ENCODE measurements at regions of chr16 and their contacts with region 1.

Region 1: DNA sequence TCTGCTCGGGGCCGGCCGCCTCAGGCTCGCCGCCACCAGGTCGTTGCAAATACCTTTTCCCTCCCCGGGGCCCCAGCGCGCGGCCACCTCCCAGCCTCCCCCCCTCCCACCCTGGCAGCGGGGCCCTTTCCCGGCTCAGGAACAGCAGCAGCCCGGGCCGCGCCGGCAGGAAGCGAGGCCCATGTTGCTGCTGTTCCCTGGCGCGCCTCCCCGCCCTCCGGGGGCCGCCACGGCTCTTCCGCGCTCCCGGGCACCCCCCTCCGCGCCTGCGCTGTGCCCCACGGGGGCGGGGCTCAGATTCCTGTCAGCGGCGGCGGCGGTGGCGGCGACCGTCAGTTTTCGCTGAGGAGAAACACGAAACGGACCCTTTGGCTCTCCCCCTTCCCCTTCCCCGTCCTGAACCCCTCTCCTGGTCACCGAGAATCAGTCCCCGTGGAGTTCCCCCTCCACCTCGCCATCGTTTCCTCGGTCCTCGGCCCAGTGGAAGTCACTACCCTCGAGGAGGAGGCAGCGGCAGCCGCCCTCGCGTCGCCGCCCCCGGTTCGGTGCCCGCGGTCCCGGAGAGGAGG is at the start of gene NFAT5:
- DNase-seq: peak; percentile 78 to 100 (median 96)
- ATAC-seq: peak; percentile 93
- H3K4me3 ChIP-seq: peak within 1 kb of the TSS; percentile 90
- H3K4me3 Mint-ChIP-seq: peak within 1 kb of the TSS; percentile 91 to 100 (median 97)
- H3K27ac ChIP-seq: peak within 1 kb of the TSS; percentile 97
- H3K27ac Mint-ChIP-seq: peak within 1 kb of the TSS; percentile 94 to 98 (median 96)
- H3K4me1 ChIP-seq: peaks cover 13 to 33% of the 10 kb centered on the region in 2 donors
- H3K4me1 Mint-ChIP-seq: peaks cover 39 to 59% (median 48%) of the 10 kb centered on the region in 7 donors
- H3K27me3 ChIP-seq: no peaks in the 10 kb centered on the region
- H3K27me3 Mint-ChIP-seq: no peaks in the 10 kb centered on the region
- total RNA-seq, gene NFAT5: 27.3 to 35.5 (median 34.2) TPM

Region 2: GRCh38 chr16:69132424-69133252 is 433.1 kb before region 1 on chr16 and contains the starts of genes CHTF8 and UTP4:
- CTCF ChIA-PET with region 1: no interaction called
- POLR2A ChIA-PET with region 1: no interaction called
- intact Hi-C with region 1: loop called (anchors 1 to 2 kb)
- DNase-seq: peak; percentile 81 to 91 (median 87)
- ATAC-seq: peak; percentile 95
- H3K4me3 ChIP-seq: peak within 1 kb of the TSS; percentile 80
- H3K4me3 Mint-ChIP-seq: peak within 1 kb of the TSS; percentile 91 to 97 (median 94)
- H3K27ac ChIP-seq: peak within 1 kb of the TSS; percentile 88
- H3K27ac Mint-ChIP-seq: peak within 1 kb of the TSS; percentile 85 to 97 (median 95)
- H3K4me1 ChIP-seq: peaks cover 12 to 23% of the 10 kb centered on the region in 2 donors
- H3K4me1 Mint-ChIP-seq: peaks cover 16 to 71% (median 61%) of the 10 kb centered on the region in 7 donors
- H3K27me3 ChIP-seq: no peaks in the 10 kb centered on the region
- H3K27me3 Mint-ChIP-seq: no peaks in the 10 kb centered on the region
- total RNA-seq, gene CHTF8: 53.3 to 142 (median 133) TPM
- total RNA-seq, gene UTP4: 31.9 to 56.5 (median 35.1) TPM

Region 3: GRCh38 chr16:69339289-69340108 is 226.3 kb before region 1 on chr16 and contains the starts of genes COG8 and NIP7:
- CTCF ChIA-PET with region 1: no interaction called
- POLR2A ChIA-PET with region 1: interaction called, 5 read pairs
- intact Hi-C with region 1: loop called (anchors 1 to 10 kb)
- DNase-seq: peak; percentile 78 to 91 (median 90)
- ATAC-seq: peak; percentile 95
- H3K4me3 ChIP-seq: peak within 1 kb of the TSS; percentile 80
- H3K4me3 Mint-ChIP-seq: peak within 1 kb of the TSS; percentile 97 to 100 (median 99)
- H3K27ac ChIP-seq: peak within 1 kb of the TSS; percentile 86
- H3K27ac Mint-ChIP-seq: peak within 1 kb of the TSS; percentile 95 to 99 (median 98)
- H3K4me1 ChIP-seq: peaks cover 20 to 25% of the 10 kb centered on the region in 2 donors
- H3K4me1 Mint-ChIP-seq: peaks cover 31 to 70% (median 49%) of the 10 kb centered on the region in 7 donors
- H3K27me3 ChIP-seq: no peaks in the 10 kb centered on the region
- H3K27me3 Mint-ChIP-seq: no peaks in the 10 kb centered on the region
- total RNA-seq, gene COG8: 29.5 to 73.7 (median 37.4) TPM
- total RNA-seq, gene NIP7: 22.1 to 40.9 (median 30.3) TPM

Region 4: DNA sequence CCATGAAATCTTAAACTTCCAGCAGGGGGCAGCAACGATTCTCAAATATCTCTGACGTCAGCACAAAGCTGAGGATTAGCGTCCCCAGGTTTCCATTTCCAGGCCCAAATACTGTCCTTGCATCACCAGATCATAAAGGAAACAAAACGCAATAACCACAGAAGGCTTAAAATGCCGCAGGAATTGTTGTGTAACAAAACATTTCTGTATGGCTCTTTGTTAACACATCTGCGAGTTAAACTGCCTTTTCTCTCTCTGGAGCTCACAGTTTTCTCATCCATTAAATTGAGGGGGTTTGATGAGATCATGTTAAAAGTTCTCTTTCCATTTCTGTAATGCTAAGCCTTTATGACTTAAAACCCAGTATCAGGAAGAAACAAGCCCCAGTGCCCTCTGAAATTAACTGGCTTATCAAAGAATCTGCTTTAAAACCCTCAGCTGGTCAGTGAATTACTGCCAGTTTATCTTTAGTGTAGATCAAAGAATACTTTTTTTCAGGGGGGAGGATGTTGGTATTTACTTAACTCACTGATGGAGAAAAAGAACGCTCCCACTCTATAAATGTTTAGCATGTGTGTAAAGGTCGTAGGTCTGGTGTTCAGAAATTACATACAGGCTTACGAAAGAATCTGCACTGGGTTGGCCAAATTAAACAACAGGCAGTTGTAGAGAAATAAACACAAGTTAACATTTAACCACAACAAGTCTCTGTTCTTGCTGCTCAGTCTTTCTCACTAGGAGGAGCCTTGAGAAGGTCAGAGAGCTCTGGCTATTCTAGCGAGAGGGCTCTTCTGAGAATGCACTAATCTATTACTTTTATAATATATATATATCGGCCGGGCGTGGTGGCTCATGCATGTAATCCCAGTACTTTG is 169.3 kb before region 1 on chr16:
- CTCF ChIA-PET with region 1: interaction called, 8 read pairs
- POLR2A ChIA-PET with region 1: interaction called, 4 read pairs
- intact Hi-C with region 1: loop called (anchors 1 to 2 kb)
- DNase-seq: peak; percentile 23 to 73 (median 66)
- ATAC-seq: peak; percentile 86
- H3K4me3 ChIP-seq: no peak overlapping the region
- H3K4me3 Mint-ChIP-seq: peak overlapping the region in 3 of 10 donors; percentile 26 to 57 (median 50)
- H3K27ac ChIP-seq: peak overlapping the region; percentile 22
- H3K27ac Mint-ChIP-seq: peak overlapping the region; percentile 8 to 76 (median 41)
- H3K4me1 ChIP-seq: peaks cover 0 to 3% of the 10 kb centered on the region in 2 donors
- H3K4me1 Mint-ChIP-seq: peaks cover 0 to 17% (median 5%) of the 10 kb centered on the region in 7 donors
- H3K27me3 ChIP-seq: no peaks in the 10 kb centered on the region
- H3K27me3 Mint-ChIP-seq: peaks cover 0 to 11% (median 0%) of the 10 kb centered on the region in 5 donors

Region 5: DNA sequence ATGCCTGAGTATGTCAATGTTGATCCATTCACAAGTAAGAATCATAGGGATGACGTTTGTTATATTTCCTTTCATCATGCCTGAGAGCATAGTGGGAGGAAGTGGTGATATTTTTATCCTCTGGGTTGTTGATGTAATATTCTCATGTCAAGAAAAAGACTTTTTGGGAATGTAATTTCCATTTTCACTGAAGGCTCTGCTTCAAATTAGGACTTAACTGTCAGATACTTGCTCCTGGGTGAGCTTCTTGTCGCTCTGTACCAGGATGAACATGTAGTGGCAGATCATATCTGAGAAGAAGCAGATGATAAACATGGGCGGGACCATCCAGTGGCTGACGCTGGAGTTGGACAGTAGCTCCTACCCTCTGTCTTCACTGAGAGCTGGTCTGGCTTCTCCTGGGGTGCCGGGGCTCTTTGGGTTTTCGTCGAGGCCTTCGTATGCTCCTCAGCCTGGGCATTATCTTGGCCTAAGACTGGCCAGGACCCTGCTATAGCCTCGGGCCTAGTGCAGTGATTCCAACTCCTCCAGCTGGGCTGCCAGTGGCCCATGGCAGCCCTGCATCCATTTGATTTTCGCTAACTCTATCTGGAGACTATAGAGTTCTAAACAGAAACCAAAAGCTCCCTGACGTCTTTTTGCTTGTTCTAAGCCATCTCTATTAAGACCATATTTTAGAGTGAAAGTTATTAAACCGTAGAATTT is 121.7 kb before region 1 on chr16:
- CTCF ChIA-PET with region 1: no interaction called
- POLR2A ChIA-PET with region 1: interaction called, 13 read pairs
- intact Hi-C with region 1: loop called in 1 of 2 experiments (anchors 1 kb)
- DNase-seq: peak in 7 of 9 donors; percentile 1 to 51 (median 35)
- ATAC-seq: peak; percentile 85
- H3K4me3 ChIP-seq: peak overlapping the region; percentile 45
- H3K4me3 Mint-ChIP-seq: peak overlapping the region; percentile 68 to 90 (median 86)
- H3K27ac ChIP-seq: peak overlapping the region; percentile 64
- H3K27ac Mint-ChIP-seq: peak overlapping the region; percentile 86 to 98 (median 96)
- H3K4me1 ChIP-seq: peaks cover 10 to 26% of the 10 kb centered on the region in 2 donors
- H3K4me1 Mint-ChIP-seq: peaks cover 16 to 51% (median 41%) of the 10 kb centered on the region in 7 donors
- H3K27me3 ChIP-seq: no peaks in the 10 kb centered on the region
- H3K27me3 Mint-ChIP-seq: no peaks in the 10 kb centered on the region

Region 6: GRCh38 chr16:69531988-69532387 is 33.8 kb before region 1 on chr16:
- CTCF ChIA-PET with region 1: no interaction called
- POLR2A ChIA-PET with region 1: no interaction called
- intact Hi-C with region 1: loop called (anchors 2 kb)
- DNase-seq: no peak
- ATAC-seq: no peak
- H3K4me3 ChIP-seq: no peak overlapping the region
- H3K4me3 Mint-ChIP-seq: no peak overlapping the region
- H3K27ac ChIP-seq: no peak overlapping the region
- H3K27ac Mint-ChIP-seq: no peak overlapping the region
- H3K4me1 ChIP-seq: peaks cover 0 to 5% of the 10 kb centered on the region in 2 donors
- H3K4me1 Mint-ChIP-seq: peaks cover 0 to 16% (median 8%) of the 10 kb centered on the region in 7 donors
- H3K27me3 ChIP-seq: no peaks in the 10 kb centered on the region
- H3K27me3 Mint-ChIP-seq: peaks cover 0 to 5% (median 3%) of the 10 kb centered on the region in 5 donors

Region 7: GRCh38 chr16:69618307-69618706 is 52.6 kb after region 1 on chr16:
- CTCF ChIA-PET with region 1: no interaction called
- POLR2A ChIA-PET with region 1: no interaction called
- intact Hi-C with region 1: no loop called
- DNase-seq: no peak
- ATAC-seq: no peak
- H3K4me3 ChIP-seq: no peak overlapping the region
- H3K4me3 Mint-ChIP-seq: no peak overlapping the region
- H3K27ac ChIP-seq: no peak overlapping the region
- H3K27ac Mint-ChIP-seq: no peak overlapping the region
- H3K4me1 ChIP-seq: peaks cover 0 to under 1% of the 10 kb centered on the region in 2 donors
- H3K4me1 Mint-ChIP-seq: peaks cover 21 to 64% (median 47%) of the 10 kb centered on the region in 7 donors
- H3K27me3 ChIP-seq: no peaks in the 10 kb centered on the region
- H3K27me3 Mint-ChIP-seq: no peaks in the 10 kb centered on the region

Region 8: GRCh38 chr16:69761983-69762813 is 196.4 kb after region 1 on chr16 and contains the start of gene WWP2:
- CTCF ChIA-PET with region 1: no interaction called
- POLR2A ChIA-PET with region 1: interaction called, 3 read pairs
- intact Hi-C with region 1: loop called in 1 of 2 experiments (anchors 2 kb)
- DNase-seq: peak; percentile 68 to 81 (median 77)
- ATAC-seq: peak; percentile 86
- H3K4me3 ChIP-seq: peak within 1 kb of the TSS; percentile 88
- H3K4me3 Mint-ChIP-seq: peak within 1 kb of the TSS; percentile 77 to 96 (median 94)
- H3K27ac ChIP-seq: peak within 1 kb of the TSS; percentile 92
- H3K27ac Mint-ChIP-seq: peak within 1 kb of the TSS; percentile 93 to 99 (median 98)
- H3K4me1 ChIP-seq: peaks cover 10 to 14% of the 10 kb centered on the region in 2 donors
- H3K4me1 Mint-ChIP-seq: peaks cover 16 to 47% (median 37%) of the 10 kb centered on the region in 7 donors
- H3K27me3 ChIP-seq: no peaks in the 10 kb centered on the region
- H3K27me3 Mint-ChIP-seq: peaks cover 0 to 5% (median 0%) of the 10 kb centered on the region in 5 donors
- total RNA-seq, gene WWP2: 58.4 to 81.3 (median 72.1) TPM